Activated CD4-positive, alpha-beta T cell treated with anti-CD3 and anti-CD28 coated beads, Interleukin-2, amount 10 ng/mL, durations not matched to agents 24 days and 14 days (primary cell): ENCODE measurements at regions of chr6 and their contacts with region 1.

Region 1: GRCh38 chr6:133923938-133924593 is 29.0 kb upstream of the TBPL1 start:
- DNase-seq: peak; percentile 86
- H3K4me3 Mint-ChIP-seq: no peak overlapping the region
- H3K27ac Mint-ChIP-seq: no peak overlapping the region
- H3K4me1 Mint-ChIP-seq: no peaks in the 10 kb centered on the region
- H3K27me3 Mint-ChIP-seq: peaks cover 35% of the 10 kb centered on the region

Region 2: GRCh38 chr6:134063966-134064445 is 139.9 kb after region 1 on chr6:
- intact Hi-C with region 1: loop called (anchors 1 kb)
- DNase-seq: peak; percentile 88
- H3K4me3 Mint-ChIP-seq: no peak overlapping the region
- H3K27ac Mint-ChIP-seq: no peak overlapping the region
- H3K4me1 Mint-ChIP-seq: no peaks in the 10 kb centered on the region
- H3K27me3 Mint-ChIP-seq: peaks cover 7% of the 10 kb centered on the region